Activated CD8-positive, alpha-beta T cell treated with anti-CD3 and anti-CD28 coated beads, Interleukin-2, amount 10 ng/mL, durations not matched to agents 7 days and 5 days (primary cell): ENCODE measurements at regions of chr7 and their contacts with region 1.

Region 1: GRCh38 chr7:35519971-35520809 is 174.7 kb downstream of the HERPUD2 start:
- DNase-seq: peak; percentile 76
- ATAC-seq: peak; percentile 77
- H3K4me3 Mint-ChIP-seq: no peak overlapping the region
- H3K27ac Mint-ChIP-seq: no peak overlapping the region
- H3K4me1 Mint-ChIP-seq: no peaks in the 10 kb centered on the region
- H3K27me3 Mint-ChIP-seq: peaks cover 28% of the 10 kb centered on the region

Region 2: DNA sequence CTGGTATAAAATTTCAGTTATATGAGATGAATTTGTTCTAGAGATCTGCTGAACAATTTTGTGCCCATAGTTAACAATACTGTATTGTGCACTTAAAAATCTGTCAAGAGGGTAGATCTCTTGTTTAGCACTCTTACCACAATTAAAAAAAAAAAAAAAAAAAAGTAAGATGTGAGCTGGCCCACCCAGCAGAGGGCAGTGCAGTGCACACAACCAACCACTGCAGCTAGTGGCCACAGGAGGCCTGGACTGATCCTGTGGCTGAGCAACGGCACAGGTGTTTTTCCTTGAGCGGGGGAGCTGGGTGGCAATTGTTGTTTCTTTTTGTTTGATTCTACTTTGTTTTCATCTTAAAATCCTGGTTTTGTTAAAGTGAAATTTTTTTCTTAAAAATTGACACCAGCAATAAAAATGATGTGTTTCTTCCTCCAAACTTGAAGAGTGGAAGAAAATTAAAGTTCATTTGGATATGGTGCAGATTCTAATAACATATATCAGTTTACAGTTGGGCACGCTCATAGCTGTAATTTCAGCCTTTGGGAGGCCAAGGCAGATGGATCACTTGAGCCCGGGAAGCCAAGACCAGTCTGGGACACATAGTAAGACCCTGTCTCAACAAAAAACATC is 95.2 kb before region 1 on chr7:
- CTCF ChIA-PET with region 1: interaction called, 18 read pairs
- POLR2A ChIA-PET with region 1: no interaction called
- DNase-seq: peak; percentile 68
- ATAC-seq: peak; percentile 64
- H3K4me3 Mint-ChIP-seq: no peak overlapping the region
- H3K27ac Mint-ChIP-seq: no peak overlapping the region
- H3K4me1 Mint-ChIP-seq: no peaks in the 10 kb centered on the region
- H3K27me3 Mint-ChIP-seq: peaks cover 7% of the 10 kb centered on the region

Region 3: DNA sequence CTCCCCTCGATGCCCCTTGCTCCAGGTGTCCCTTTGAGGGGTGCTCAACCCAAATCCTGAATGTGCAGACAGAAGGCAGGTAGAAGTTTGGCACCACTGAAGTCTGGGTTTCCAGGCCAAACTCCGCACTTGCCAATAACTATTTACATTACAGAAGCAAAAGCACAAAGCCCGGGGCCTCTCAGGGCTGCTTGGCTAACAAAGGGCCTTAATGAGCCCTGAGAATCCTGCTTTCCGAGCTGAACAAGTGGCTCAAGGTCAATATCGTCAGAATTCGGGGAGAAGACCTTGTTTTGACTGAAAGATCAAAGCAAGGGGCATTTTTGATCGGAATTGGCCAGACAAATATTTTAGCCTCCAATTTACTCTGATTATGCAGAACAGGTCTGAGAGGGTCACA is 15.1 kb before region 1 on chr7:
- CTCF ChIA-PET with region 1: interaction called, 10 read pairs
- POLR2A ChIA-PET with region 1: no interaction called
- DNase-seq: no peak
- ATAC-seq: no peak
- H3K4me3 Mint-ChIP-seq: no peak overlapping the region
- H3K27ac Mint-ChIP-seq: no peak overlapping the region
- H3K4me1 Mint-ChIP-seq: no peaks in the 10 kb centered on the region
- H3K27me3 Mint-ChIP-seq: peaks cover 3% of the 10 kb centered on the region